MCF 10A (cell line): ENCODE measurements at regions of chr13 and their contacts with region 1.

Region 1: DNA sequence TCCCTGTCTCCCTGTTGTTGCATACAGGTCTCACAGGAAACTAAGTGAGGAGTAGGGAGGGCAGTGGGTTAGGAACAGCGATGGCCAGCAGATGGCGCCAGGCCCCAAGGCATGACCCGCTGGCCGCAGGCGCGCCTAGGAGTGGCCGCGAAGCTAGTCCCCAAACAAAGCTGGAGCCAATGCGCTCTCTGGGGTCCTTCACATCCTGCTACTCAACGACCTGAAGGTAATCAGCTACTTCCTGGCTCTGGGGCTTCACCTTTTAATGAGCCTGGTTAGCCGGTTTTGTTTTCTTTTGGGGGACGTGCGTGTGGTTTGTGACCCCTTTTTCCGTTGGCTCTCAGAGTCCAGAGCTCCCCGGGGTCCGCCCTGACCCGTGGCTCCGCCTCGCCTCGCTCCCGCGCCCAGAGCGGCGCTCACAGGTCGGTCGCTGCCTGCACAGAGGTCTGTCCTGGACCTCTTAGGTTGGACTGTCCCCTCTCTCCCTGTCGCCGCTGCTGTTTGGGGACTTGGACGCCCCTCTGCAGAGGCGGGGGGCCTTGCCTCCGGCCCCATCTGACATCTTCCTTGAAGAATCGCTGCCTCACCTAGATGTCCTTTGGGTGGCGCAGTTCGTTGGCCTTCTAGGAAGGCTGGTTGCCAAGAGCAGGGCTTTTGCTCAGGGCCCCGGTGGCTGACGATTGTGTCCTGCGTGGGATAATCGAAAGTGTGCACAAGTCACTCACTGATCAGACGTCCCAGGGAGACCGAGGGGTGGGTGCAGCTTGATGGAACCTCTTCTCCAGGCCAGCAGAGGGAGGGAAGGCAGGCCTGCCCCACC is 62.1 kb upstream of the GTF3A start:
- DNase-seq: peak; percentile 79
- H3K4me3 Mint-ChIP-seq: peak overlapping the region; percentile 49
- H3K27ac Mint-ChIP-seq: peak overlapping the region; percentile 49
- H3K4me1 Mint-ChIP-seq: no peaks in the 10 kb centered on the region
- H3K27me3 Mint-ChIP-seq: peaks cover 6% of the 10 kb centered on the region
- CTCF ChIP-seq: peak; percentile 92

Region 2: GRCh38 chr13:26628706-26629105 is 733.6 kb before region 1 on chr13:
- CTCF ChIA-PET with region 1: no interaction called
- POLR2A ChIA-PET with region 1: no interaction called
- intact Hi-C with region 1: no loop called
- DNase-seq: peak; percentile 24
- H3K4me3 Mint-ChIP-seq: no peak overlapping the region
- H3K27ac Mint-ChIP-seq: no peak overlapping the region
- H3K4me1 Mint-ChIP-seq: no peaks in the 10 kb centered on the region
- H3K27me3 Mint-ChIP-seq: no peaks in the 10 kb centered on the region
- CTCF ChIP-seq: peak; percentile 9

Region 3: DNA sequence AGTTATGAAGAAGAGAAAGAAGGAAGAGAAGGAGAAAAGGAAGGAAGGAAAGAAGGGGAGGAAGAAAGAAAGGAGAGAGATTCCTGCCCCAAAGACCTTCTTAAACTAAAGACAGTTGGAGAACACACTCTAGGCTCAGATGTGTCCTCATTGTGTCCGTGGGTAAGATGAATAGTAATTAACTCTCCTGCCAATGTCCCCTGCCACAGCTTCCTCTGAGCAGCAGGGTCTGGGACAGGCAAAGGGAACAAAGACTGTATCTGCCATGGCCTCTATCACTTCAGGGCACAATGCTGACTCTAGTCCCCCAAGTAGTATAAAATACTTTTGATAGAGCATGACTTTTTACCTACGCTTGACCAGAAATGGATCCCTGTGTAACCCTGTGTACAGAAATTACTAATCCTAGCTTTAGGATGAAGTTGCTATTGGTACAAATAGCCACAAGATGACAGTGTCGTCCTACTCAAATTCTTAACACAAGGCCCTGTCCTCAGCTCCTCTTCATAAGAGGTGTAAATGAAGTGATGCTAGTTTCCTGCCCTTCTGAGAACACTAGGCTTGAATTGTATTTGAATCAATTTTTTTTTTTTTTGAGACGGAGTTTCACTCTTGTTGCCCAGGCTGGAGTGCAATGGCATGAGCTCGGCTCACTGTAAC is 415.5 kb before region 1 on chr13:
- CTCF ChIA-PET with region 1: interaction called, 70 read pairs
- POLR2A ChIA-PET with region 1: no interaction called
- intact Hi-C with region 1: loop called (anchors 1 kb)
- DNase-seq: peak; percentile 59
- H3K4me3 Mint-ChIP-seq: no peak overlapping the region
- H3K27ac Mint-ChIP-seq: no peak overlapping the region
- H3K4me1 Mint-ChIP-seq: no peaks in the 10 kb centered on the region
- H3K27me3 Mint-ChIP-seq: no peaks in the 10 kb centered on the region
- CTCF ChIP-seq: peak; percentile 74

Region 4: GRCh38 chr13:26985285-26985878 is 376.9 kb before region 1 on chr13:
- CTCF ChIA-PET with region 1: interaction called, 177 read pairs
- POLR2A ChIA-PET with region 1: interaction called, 6 read pairs
- intact Hi-C with region 1: loop called (anchors 1 kb)
- DNase-seq: peak; percentile 85
- H3K4me3 Mint-ChIP-seq: no peak overlapping the region
- H3K27ac Mint-ChIP-seq: no peak overlapping the region
- H3K4me1 Mint-ChIP-seq: peaks cover 18% of the 10 kb centered on the region
- H3K27me3 Mint-ChIP-seq: peaks cover 7% of the 10 kb centered on the region
- CTCF ChIP-seq: peak; percentile 81

Region 5: GRCh38 chr13:27251166-27252091 is 110.8 kb before region 1 on chr13 and contains the start of gene RPL21:
- CTCF ChIA-PET with region 1: interaction called, 5 read pairs
- POLR2A ChIA-PET with region 1: interaction called, 4 read pairs
- intact Hi-C with region 1: loop called (anchors 1 kb)
- DNase-seq: peak; percentile 95
- H3K4me3 Mint-ChIP-seq: peak within 1 kb of the TSS; percentile 93
- H3K27ac Mint-ChIP-seq: peak within 1 kb of the TSS; percentile 99
- H3K4me1 Mint-ChIP-seq: peaks cover 14% of the 10 kb centered on the region
- H3K27me3 Mint-ChIP-seq: no peaks in the 10 kb centered on the region
- CTCF ChIP-seq: no peak
- total RNA-seq, gene RPL21: 1,293 and 1,479 TPM in 2 replicates

Region 6: DNA sequence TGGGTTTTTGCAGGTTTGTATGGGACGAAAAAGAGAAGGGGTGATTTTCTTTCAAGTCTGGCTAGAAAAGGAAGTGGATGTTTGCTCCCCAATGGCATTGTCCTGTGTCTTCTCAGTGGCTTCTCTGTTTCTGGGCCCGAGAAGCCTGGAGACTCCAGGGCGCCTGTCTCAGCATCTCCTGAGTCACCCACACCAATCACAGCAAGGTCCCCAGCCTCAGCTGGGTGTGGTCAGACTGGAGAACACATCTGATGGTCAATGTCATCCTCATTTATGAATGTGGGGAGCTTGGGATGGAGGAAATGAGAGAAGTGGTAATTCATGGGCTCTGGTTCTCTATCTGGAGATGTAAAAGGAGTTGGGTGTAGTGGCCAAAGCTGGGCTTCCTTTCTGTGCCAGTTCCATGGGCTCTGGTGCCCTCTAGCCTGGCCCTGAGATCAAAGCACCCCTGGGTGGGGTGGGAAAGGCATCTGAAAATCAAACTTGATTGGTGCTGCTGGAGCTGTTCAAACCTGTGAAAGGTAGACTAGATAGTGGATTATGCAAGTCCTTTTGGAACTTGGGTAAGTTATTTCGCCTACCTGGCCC is 78.3 kb before region 1 on chr13:
- CTCF ChIA-PET with region 1: interaction called, 3 read pairs
- POLR2A ChIA-PET with region 1: no interaction called
- intact Hi-C with region 1: loop called (anchors 2 kb)
- DNase-seq: peak; percentile 56
- H3K4me3 Mint-ChIP-seq: no peak overlapping the region
- H3K27ac Mint-ChIP-seq: no peak overlapping the region
- H3K4me1 Mint-ChIP-seq: no peaks in the 10 kb centered on the region
- H3K27me3 Mint-ChIP-seq: no peaks in the 10 kb centered on the region
- CTCF ChIP-seq: no peak

Region 7: DNA sequence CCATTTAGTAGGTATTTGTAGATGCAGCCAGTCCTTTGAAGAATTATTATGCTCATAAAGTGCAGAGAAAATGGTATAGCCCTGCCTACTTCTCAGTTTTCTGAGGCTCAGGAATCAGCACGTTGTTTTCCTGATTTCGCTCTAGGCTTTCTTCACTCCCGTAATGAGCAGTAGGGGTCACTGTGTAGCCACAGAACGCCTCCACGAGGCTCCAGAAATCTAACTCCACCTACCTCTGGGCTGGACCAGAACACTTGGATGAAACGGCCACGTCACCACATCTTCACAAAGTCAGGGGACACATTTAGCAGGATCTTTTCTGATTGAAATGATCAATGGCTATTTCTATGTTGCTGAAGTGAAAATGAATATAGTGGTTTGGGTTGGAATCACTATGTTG is 12.4 kb after region 1 on chr13:
- CTCF ChIA-PET with region 1: interaction called, 59 read pairs
- POLR2A ChIA-PET with region 1: no interaction called
- intact Hi-C with region 1: no loop called
- DNase-seq: peak; percentile 86
- H3K4me3 Mint-ChIP-seq: no peak overlapping the region
- H3K27ac Mint-ChIP-seq: no peak overlapping the region
- H3K4me1 Mint-ChIP-seq: no peaks in the 10 kb centered on the region
- H3K27me3 Mint-ChIP-seq: peaks cover 10% of the 10 kb centered on the region
- CTCF ChIP-seq: peak; percentile 66

Region 8: DNA sequence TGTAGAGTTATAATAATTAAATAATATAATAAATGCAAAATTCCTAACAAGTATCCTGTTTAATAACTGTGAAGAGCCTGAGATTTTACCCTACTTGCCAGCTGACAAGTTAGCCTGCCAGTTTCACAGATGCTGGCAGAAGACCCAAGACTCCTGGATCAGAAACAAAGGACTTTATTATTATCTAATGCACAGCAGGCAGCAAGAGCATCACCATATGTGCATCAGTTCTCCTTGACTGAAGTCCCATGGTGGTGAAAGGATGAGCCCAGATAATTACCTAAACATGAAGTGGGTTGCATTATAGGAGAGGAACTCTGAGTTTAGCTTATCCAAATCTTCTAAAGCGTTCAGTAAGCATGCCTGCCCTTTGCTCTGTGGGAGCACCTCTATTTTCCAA is 127.2 kb after region 1 on chr13:
- CTCF ChIA-PET with region 1: no interaction called
- POLR2A ChIA-PET with region 1: no interaction called
- intact Hi-C with region 1: no loop called
- DNase-seq: no peak
- H3K4me3 Mint-ChIP-seq: no peak overlapping the region
- H3K27ac Mint-ChIP-seq: no peak overlapping the region
- H3K4me1 Mint-ChIP-seq: no peaks in the 10 kb centered on the region
- H3K27me3 Mint-ChIP-seq: no peaks in the 10 kb centered on the region
- CTCF ChIP-seq: no peak

Region 9: GRCh38 chr13:27988520-27988919 is 626.2 kb after region 1 on chr13 and contains the start of gene URAD:
- CTCF ChIA-PET with region 1: interaction called, 74 read pairs
- POLR2A ChIA-PET with region 1: interaction called, 6 read pairs
- intact Hi-C with region 1: loop called (anchors 1 kb)
- DNase-seq: no peak
- H3K4me3 Mint-ChIP-seq: no peak within 1 kb of the TSS
- H3K27ac Mint-ChIP-seq: no peak within 1 kb of the TSS
- H3K4me1 Mint-ChIP-seq: no peaks in the 10 kb centered on the region
- H3K27me3 Mint-ChIP-seq: peaks cover 14% of the 10 kb centered on the region
- CTCF ChIP-seq: no peak
- total RNA-seq, gene URAD: not detected in 2 replicates